Cardiac septum (tissue), 1 donor: ENCODE measurements at regions of chr5 and their contacts with region 1.

Region 1: GRCh38 chr5:107673368-107674136 is 2.8 kb upstream of the EFNA5 start:
- DNase-seq: peak; percentile 91

Region 2: DNA sequence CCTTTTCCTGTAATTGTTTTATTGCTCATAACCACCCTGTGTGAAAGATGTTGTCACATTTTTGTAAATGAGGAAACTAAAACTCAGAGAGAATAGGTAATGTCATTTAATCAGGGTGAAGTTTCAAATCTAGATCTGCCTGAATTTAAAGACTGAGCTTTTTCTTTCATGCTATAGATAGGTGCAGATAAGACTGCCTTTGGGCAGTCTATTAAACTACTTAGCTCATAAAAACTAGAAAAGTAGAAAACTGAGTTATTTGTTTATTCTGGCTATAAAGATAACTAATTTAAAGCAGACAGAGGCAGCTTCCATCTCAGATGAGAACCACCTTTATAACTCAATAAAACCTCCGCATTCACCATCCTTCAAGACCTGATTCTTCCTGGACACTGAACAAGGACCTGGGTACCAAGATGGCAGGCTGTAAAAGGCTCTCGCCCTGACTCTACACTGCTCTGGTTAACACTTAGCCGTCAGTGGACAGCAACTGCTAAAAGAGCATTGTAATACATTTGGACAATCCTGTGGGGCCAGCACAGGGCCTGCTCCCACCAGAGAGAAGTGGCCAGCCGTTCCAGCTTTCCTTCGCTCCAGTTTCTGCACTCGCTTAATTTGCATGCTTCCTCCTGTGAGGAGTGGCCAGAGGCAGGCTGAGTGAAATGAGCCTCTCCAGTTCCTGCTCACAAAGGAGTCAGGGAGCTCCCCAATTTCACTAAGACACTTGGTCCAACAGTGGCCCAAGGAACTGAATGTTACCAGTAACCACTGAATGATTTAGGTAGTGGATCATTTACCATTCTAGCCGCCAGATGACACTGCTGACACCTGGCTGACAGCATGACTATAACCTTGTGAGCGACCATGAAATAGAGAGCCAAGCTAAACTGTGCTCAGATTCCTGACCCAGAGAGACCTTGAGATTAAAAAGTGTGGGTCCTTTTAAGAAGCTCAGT is 569.2 kb before region 1 on chr5:
- intact Hi-C with region 1: loop called (anchors 5 kb)
- DNase-seq: no peak

Region 3: DNA sequence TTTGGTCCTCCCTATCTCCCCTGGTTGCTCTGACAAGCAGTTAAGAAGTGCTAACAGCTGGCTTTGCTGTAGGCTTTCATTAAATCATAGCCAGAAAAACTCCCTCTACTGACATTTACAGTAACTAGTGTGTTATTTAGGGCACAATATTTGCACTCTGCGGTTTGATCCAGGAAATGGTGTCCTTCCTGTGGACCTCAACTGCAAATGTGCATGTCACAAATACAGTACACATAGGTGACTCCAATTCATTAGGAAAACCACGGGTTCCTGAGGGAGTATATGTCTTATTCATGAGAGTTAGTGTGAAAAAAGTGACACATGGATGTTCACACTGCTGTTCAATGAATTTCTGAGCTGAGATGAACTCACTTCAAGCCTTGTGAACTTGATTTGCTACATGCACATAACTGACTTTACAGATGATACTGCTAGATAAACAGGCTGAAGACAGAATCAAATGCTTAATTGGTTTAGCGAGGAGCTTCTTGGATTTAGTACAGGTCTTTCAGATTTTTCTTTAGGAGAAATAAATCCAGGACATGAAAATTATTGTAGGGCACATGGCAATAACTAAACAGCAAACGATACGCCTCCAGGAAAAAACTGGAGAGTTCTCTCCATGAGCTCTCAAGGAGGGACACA is 284.3 kb before region 1 on chr5:
- intact Hi-C with region 1: loop called (anchors 5 kb)
- DNase-seq: no peak

Region 4: DNA sequence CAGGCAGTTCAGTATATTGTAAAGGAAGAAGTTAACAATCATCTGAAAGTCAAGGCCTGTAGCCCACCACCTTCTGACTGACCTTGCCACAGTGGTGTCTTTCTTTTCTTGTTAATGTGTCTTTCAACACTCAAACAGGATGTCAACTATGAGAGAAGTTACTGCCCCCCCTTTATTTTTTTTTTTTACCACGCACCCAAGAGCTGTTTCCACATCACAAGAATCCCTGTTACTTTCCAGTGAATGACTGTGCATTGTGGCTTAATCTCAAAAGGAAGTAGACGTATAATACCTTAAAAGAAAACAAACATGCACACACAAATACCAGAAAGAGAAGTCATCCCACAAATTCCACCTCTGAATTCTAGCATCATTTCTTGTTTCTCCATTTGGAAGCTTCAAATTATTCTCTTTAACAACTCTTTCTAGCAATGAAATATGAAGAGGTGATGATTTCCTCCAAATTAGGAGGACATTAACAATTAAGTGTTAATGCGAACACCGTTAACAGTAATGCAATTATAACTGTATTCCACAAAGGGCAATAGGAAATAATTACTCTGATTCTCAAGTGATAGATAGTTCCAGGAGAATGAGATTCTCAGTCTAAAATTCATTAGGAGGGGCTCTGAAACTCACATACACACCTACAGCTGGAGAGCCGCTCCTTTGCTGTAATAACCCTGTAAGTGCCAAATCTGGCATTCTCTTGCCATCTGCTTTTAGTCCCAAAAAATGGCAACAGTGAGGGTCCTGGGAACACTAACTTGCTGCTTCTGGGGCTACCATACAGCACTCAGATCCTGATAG is 203.9 kb before region 1 on chr5:
- intact Hi-C with region 1: loop called (anchors 5 kb)
- DNase-seq: no peak

Region 5: GRCh38 chr5:107557051-107557658 is 116.4 kb before region 1 on chr5:
- intact Hi-C with region 1: loop called (anchors 5 kb)
- DNase-seq: peak; percentile 76

Region 6: GRCh38 chr5:107594253-107595045 is 79.1 kb before region 1 on chr5:
- intact Hi-C with region 1: loop called (anchors 5 kb)
- DNase-seq: no peak